Thyroid gland (tissue), 4 donors: ENCODE measurements at regions of chr13 and their contacts with region 1.

Region 1: GRCh38 chr13:79775830-79776229 is 294.9 kb downstream of the NDFIP2 start:
- DNase-seq: peak; percentile 38 to 41
- H3K4me3 ChIP-seq: no peak overlapping the region
- H3K27ac ChIP-seq: no peak overlapping the region
- H3K4me1 ChIP-seq: peaks cover 14 to 26% of the 10 kb centered on the region in 2 donors
- H3K27me3 ChIP-seq: no peaks in the 10 kb centered on the region
- CTCF ChIP-seq: peak in 4 of 6 experiments; percentile 61 to 69 (median 64)
- POLR2A ChIP-seq: no peak

Region 2: DNA sequence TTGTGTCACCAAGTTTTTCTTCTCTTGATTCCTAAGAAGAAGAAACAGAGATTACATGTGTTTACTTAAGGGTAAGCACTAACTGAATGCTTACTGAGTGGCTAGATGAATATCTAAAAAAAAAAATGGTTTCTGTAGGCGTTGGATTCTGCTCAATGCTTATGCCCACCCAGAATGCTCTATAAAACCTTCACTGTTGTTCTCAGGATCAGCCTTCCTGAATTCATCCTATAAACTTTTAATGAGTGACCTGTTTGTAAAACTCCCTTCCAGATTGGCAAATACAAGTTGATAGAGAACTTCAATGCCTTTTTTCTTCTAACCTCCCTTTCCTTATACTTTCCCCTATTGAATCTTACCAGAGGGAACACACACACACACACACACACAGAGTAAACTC is 204.7 kb before region 1 on chr13:
- intact Hi-C with region 1: no loop called
- DNase-seq: no peak
- H3K4me3 ChIP-seq: no peak overlapping the region
- H3K27ac ChIP-seq: no peak overlapping the region
- H3K4me1 ChIP-seq: no peaks in the 10 kb centered on the region
- H3K27me3 ChIP-seq: no peaks in the 10 kb centered on the region
- CTCF ChIP-seq: no peak
- POLR2A ChIP-seq: no peak

Region 3: DNA sequence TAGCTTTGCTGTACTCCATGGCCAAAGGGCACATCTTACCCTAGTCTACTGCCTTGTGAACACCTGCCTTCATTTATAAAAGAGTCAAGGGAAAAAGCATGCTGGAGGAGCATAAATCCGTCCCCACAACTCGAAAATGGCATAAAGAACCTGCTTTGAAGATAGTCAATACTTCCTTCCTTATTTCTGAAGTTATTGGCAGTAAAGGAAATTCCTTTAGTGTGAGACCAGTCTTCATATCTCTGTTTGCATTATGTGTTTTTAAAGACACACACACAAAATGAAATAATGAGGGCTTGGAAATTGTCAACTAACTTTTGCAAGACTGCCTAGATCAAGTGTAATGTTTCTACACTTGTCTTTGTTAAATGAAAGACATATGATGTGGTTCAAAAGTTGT is 156.7 kb after region 1 on chr13:
- intact Hi-C with region 1: no loop called
- DNase-seq: no peak
- H3K4me3 ChIP-seq: no peak overlapping the region
- H3K27ac ChIP-seq: no peak overlapping the region
- H3K4me1 ChIP-seq: no peaks in the 10 kb centered on the region
- H3K27me3 ChIP-seq: no peaks in the 10 kb centered on the region
- CTCF ChIP-seq: no peak
- POLR2A ChIP-seq: no peak

Region 4: GRCh38 chr13:80116107-80116506 is 340.3 kb after region 1 on chr13:
- intact Hi-C with region 1: no loop called
- DNase-seq: no peak
- H3K4me3 ChIP-seq: no peak overlapping the region
- H3K27ac ChIP-seq: no peak overlapping the region
- H3K4me1 ChIP-seq: no peaks in the 10 kb centered on the region
- H3K27me3 ChIP-seq: no peaks in the 10 kb centered on the region
- CTCF ChIP-seq: no peak
- POLR2A ChIP-seq: no peak

Region 5: GRCh38 chr13:80342471-80343380 is 566.9 kb after region 1 on chr13:
- intact Hi-C with region 1: no loop called
- DNase-seq: peak; percentile 80 to 85
- H3K4me3 ChIP-seq: peak overlapping the region; percentile 29 to 63 (median 58)
- H3K27ac ChIP-seq: peak overlapping the region; percentile 79 to 95 (median 86)
- H3K4me1 ChIP-seq: peaks cover 3 to 5% of the 10 kb centered on the region in 2 donors
- H3K27me3 ChIP-seq: no peaks in the 10 kb centered on the region
- CTCF ChIP-seq: peak; percentile 67 to 99 (median 94)
- POLR2A ChIP-seq: peak in 1 of 2 donors; percentile 62

Region 6: GRCh38 chr13:80363890-80364503 is 588.2 kb after region 1 on chr13:
- intact Hi-C with region 1: loop called (anchors 10 kb)
- DNase-seq: no peak
- H3K4me3 ChIP-seq: no peak overlapping the region
- H3K27ac ChIP-seq: no peak overlapping the region
- H3K4me1 ChIP-seq: peaks cover 5 to 16% of the 10 kb centered on the region in 2 donors
- H3K27me3 ChIP-seq: no peaks in the 10 kb centered on the region
- CTCF ChIP-seq: peak; percentile 53 to 85 (median 66)
- POLR2A ChIP-seq: no peak